Activated B cell treated with CpG ODN at 0.5 μM for 24 hours (primary cell): ENCODE measurements at regions of chr22 and their contacts with region 1.

Region 1: GRCh38 chr22:24175160-24175808 is 6.0 kb upstream of the SUSD2 start:
- DNase-seq: peak; percentile 53
- ATAC-seq: peak; percentile 66
- H3K4me3 Mint-ChIP-seq: no peak overlapping the region
- H3K27ac Mint-ChIP-seq: no peak overlapping the region
- H3K4me1 Mint-ChIP-seq: no peaks in the 10 kb centered on the region
- H3K27me3 Mint-ChIP-seq: no peaks in the 10 kb centered on the region
- CTCF ChIP-seq: peak; percentile 32

Region 2: GRCh38 chr22:23984430-23984829 is 190.9 kb before region 1 on chr22:
- CTCF ChIA-PET with region 1: no interaction called
- POLR2A ChIA-PET with region 1: no interaction called
- intact Hi-C with region 1: loop called (anchors 10 kb)
- DNase-seq: no peak
- ATAC-seq: peak; percentile 91
- H3K4me3 Mint-ChIP-seq: no peak overlapping the region
- H3K27ac Mint-ChIP-seq: no peak overlapping the region
- H3K4me1 Mint-ChIP-seq: no peaks in the 10 kb centered on the region
- H3K27me3 Mint-ChIP-seq: no peaks in the 10 kb centered on the region
- CTCF ChIP-seq: no peak

Region 3: DNA sequence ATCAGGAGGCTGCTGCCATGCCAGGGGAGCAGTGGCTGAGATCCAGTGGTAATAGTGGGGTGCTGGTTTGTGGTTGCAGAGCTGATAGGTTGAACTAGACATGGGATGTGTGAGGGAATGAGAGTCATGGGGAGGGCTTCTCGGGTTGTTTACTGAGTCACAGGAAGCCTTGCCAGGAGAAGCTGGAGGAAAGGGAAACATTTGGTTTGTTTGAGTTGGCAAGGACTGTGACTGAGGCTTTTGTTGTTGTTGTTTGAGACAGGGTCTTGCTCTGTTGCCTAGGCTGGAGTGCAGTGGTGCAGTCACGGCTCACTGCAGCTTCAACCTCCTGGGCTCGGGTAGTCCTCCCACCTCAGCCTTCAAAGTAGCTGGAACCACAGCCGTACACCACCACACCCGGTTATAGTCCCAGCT is 114.9 kb before region 1 on chr22:
- CTCF ChIA-PET with region 1: no interaction called
- POLR2A ChIA-PET with region 1: no interaction called
- intact Hi-C with region 1: loop called (anchors 1 kb)
- DNase-seq: no peak
- ATAC-seq: no peak
- H3K4me3 Mint-ChIP-seq: no peak overlapping the region
- H3K27ac Mint-ChIP-seq: no peak overlapping the region
- H3K4me1 Mint-ChIP-seq: no peaks in the 10 kb centered on the region
- H3K27me3 Mint-ChIP-seq: no peaks in the 10 kb centered on the region
- CTCF ChIP-seq: no peak

Region 4: DNA sequence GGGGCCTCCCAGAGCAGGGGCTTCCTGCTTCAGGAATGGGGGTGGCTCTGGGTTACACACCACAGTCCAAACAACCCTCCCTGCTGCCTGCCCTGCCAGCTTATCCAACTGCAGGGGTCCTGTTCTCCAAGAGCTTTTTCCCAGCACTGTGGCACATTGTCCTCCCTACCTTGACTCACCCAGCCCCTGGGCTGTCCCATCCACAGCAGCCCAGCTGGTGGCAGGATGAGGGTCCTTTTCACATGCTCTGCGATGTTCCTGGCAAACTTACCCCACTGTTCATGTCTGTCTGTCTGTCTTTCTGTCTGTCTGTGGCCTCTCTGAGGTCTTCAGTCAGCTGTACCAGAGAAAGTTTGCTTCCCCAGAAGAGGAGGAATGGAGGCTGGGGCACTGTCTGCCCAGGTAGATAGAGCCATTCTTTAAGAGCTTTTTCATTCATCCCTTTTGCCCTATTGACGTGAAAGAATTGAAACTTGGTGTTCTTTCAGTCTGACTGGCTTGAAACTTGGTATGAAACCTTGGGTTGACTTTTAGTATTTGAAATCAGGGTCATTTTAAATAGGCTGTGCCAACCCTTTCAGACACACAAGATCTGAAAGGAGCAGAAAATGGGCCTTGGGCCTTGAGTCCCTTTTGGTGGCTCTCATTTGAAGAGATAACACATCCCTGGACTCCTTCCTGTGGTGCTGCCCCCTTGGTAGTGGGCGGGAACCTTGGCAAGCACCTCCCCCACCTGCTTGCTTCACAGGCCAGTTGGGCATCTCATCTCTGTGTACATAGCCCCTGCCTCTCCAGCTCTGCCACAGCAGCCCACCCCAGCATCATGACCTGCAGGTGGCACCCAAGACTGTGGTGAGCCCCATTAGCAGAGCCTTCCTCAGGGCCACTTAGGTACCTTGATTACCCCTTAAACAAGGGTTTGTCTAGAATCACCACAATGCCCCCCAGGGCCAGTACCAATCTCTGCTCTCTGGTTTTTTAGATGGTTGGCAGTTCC is 68.6 kb before region 1 on chr22:
- CTCF ChIA-PET with region 1: interaction called, 21 read pairs
- POLR2A ChIA-PET with region 1: no interaction called
- intact Hi-C with region 1: loop called (anchors 1 kb)
- DNase-seq: peak; percentile 23
- ATAC-seq: peak; percentile 78
- H3K4me3 Mint-ChIP-seq: no peak overlapping the region
- H3K27ac Mint-ChIP-seq: no peak overlapping the region
- H3K4me1 Mint-ChIP-seq: no peaks in the 10 kb centered on the region
- H3K27me3 Mint-ChIP-seq: no peaks in the 10 kb centered on the region
- CTCF ChIP-seq: no peak

Region 5: DNA sequence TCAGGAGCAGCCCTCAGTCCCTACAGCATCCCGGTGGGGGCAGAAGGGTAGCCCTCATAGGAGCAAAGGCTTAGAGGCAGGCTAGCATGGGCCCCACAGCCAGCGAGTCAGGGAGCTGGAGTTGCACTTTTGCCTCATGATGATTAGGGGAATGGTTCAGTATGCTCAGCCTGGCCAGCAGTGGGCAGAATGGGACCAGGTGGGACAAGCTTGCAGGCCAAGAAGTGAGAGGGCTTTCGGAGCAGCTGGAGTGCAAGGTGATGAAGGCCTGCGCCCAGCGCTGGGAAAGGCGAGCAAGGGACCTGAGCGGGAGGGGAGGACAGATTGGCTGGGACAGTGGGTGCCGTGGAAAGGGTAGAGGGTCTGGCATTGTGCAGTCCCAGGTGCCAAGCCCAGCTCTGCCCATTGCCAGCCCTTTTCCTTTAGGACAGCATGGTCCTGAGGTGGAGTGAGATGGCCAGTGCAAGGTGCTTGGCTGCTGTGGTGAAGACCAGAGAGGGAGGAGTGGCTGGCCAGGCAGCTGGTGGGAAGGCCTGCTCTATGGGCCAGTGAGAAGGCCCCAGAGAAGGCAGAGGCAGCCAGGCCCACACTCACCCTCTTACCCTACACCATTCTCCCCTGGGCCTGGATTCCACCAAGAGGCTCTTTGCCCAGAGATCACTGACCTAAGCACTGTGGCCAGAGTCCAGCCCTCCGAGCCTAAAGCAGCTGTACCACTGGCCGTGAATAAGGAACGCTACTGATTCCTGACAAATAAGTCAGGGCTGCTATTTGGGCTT is 41.9 kb before region 1 on chr22:
- CTCF ChIA-PET with region 1: interaction called, 12 read pairs
- POLR2A ChIA-PET with region 1: no interaction called
- intact Hi-C with region 1: loop called (anchors 1 kb)
- DNase-seq: no peak
- ATAC-seq: no peak
- H3K4me3 Mint-ChIP-seq: no peak overlapping the region
- H3K27ac Mint-ChIP-seq: no peak overlapping the region
- H3K4me1 Mint-ChIP-seq: peaks cover 18% of the 10 kb centered on the region
- H3K27me3 Mint-ChIP-seq: no peaks in the 10 kb centered on the region
- CTCF ChIP-seq: no peak

Region 6: GRCh38 chr22:24208012-24208749 is 32.9 kb after region 1 on chr22:
- CTCF ChIA-PET with region 1: no interaction called
- POLR2A ChIA-PET with region 1: interaction called, 11 read pairs
- intact Hi-C with region 1: no loop called
- DNase-seq: no peak
- ATAC-seq: no peak
- H3K4me3 Mint-ChIP-seq: no peak overlapping the region
- H3K27ac Mint-ChIP-seq: peak overlapping the region; percentile 9
- H3K4me1 Mint-ChIP-seq: peaks cover 35% of the 10 kb centered on the region
- H3K27me3 Mint-ChIP-seq: no peaks in the 10 kb centered on the region
- CTCF ChIP-seq: no peak

Region 7: GRCh38 chr22:24789516-24789915 is 614.2 kb after region 1 on chr22:
- CTCF ChIA-PET with region 1: no interaction called
- POLR2A ChIA-PET with region 1: no interaction called
- intact Hi-C with region 1: no loop called
- DNase-seq: no peak
- ATAC-seq: no peak
- H3K4me3 Mint-ChIP-seq: no peak overlapping the region
- H3K27ac Mint-ChIP-seq: no peak overlapping the region
- H3K4me1 Mint-ChIP-seq: no peaks in the 10 kb centered on the region
- H3K27me3 Mint-ChIP-seq: peaks cover 10% of the 10 kb centered on the region
- CTCF ChIP-seq: no peak